ENCODE measurements at regions of chr3 and their contacts with region 1.

Region 1: GRCh38 chr3:185353823-185354614 is 8.9 kb upstream of the MAP3K13 start:
- DNase-seq: peak; percentile 86
- H3K4me3 Mint-ChIP-seq: no peak overlapping the region
- H3K27ac Mint-ChIP-seq: peak overlapping the region; percentile 100
- H3K4me1 Mint-ChIP-seq: peaks cover 76% of the 10 kb centered on the region
- H3K27me3 Mint-ChIP-seq: no peaks in the 10 kb centered on the region
- CTCF ChIP-seq: peak; percentile 87

Region 2: DNA sequence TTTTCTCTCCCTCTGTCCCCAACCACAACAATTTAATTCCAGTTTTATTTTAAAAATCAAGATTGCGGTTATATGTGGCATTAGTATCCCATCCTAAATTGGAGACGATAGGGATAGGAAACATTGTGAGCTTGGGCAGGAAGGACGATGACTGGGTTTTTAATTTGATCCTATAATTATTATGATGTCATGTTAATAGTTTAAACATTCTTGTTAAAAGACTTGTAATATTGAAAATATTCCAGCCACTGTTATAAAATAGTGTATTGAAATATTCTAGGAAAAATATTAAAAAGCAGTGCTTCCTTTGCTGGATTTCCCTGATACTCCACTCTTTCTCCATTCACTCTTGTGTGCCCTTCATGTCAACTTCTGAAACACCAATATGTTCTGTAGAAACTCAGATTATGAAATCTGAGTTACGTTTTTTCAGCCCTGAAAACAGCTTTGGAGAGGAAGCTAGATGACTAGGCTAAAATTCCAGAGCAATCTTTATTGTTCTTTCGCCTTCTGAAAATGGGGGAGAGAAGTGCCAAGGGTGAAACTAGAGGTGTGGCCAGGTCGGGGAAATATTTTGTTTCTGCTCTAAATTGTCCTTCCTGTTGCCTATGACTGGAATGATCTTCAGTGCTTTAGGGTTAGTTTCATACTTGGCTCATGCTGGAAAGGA is 37.1 kb before region 1 on chr3:
- CTCF ChIA-PET with region 1: no interaction called
- intact Hi-C with region 1: loop called (anchors 5 kb)
- DNase-seq: peak; percentile 62
- H3K4me3 Mint-ChIP-seq: peak overlapping the region; percentile 40
- H3K27ac Mint-ChIP-seq: peak overlapping the region; percentile 93
- H3K4me1 Mint-ChIP-seq: peaks cover 58% of the 10 kb centered on the region
- H3K27me3 Mint-ChIP-seq: no peaks in the 10 kb centered on the region
- CTCF ChIP-seq: no peak

Region 3: DNA sequence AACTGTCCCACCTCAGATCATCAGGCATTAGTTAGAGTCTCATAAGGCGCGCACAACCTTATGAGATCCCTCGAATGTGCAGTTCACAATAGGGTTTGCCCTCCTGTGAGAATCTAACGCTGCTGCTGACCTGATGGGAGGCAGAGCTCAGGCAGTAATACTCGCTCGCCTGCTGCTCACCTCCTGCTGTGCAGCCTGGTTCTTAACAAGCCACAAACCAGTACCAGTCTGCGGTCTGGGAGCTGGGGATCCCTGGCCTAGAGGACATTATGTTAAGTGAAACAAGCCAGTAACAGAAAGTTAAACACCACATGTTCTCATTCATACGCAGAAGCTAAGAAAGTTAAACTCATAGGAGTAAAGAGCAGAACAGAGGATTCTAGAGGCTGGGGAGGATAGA is 55.9 kb after region 1 on chr3:
- CTCF ChIA-PET with region 1: no interaction called
- intact Hi-C with region 1: loop called (anchors 5 kb)
- DNase-seq: no peak
- H3K4me3 Mint-ChIP-seq: no peak overlapping the region
- H3K27ac Mint-ChIP-seq: no peak overlapping the region
- H3K4me1 Mint-ChIP-seq: peaks cover 9% of the 10 kb centered on the region
- H3K27me3 Mint-ChIP-seq: no peaks in the 10 kb centered on the region
- CTCF ChIP-seq: no peak